ENCODE measurements at regions of chr6 and their contacts with region 1.

Region 1: GRCh38 chr6:132971654-132972053 is 157.3 kb downstream of the RPS12 start:
- DNase-seq: no peak
- H3K27ac ChIP-seq: no peak overlapping the region
- CTCF ChIP-seq: no peak

Region 2: GRCh38 chr6:132569170-132569569 is 402.5 kb before region 1 on chr6:
- CTCF ChIA-PET with region 1: no interaction called
- POLR2A ChIA-PET with region 1: no interaction called
- DNase-seq: no peak
- H3K27ac ChIP-seq: no peak overlapping the region
- CTCF ChIP-seq: no peak

Region 3: DNA sequence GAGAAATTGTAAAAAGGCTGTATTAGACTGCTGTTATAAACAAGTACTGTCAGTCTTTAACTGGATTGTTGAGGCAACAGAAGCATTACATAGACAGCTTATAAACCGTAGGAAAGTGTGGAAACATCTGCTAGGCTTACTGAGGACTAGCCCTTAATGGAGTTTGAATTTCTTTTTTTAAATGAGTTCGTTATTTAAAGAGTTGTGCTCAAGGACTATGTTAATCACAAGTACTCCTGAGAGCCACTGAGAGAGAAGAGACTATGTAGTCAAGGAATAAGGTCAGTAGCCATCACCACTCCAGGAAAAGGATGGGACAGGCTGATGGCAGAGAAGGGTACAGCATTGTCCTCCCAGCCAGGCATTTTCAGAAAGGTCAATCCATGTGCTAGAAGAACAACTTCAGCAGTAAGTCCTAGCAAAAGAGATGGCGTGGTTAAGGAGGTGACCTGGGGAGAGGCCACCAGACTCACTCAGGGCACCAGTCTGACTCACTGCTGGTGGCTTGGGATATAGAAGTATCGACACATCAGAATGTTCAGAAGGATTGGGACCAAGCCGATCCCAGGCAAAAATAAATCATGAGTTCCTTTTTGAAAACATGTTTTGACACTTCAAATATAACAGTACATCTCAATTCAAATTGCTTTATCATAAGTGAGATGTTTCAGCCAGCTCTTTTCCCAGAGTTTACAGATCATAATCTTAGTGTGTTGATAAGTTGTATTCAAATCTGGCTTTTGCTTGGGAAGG is 150.8 kb before region 1 on chr6:
- CTCF ChIA-PET with region 1: no interaction called
- POLR2A ChIA-PET with region 1: no interaction called
- DNase-seq: no peak
- H3K27ac ChIP-seq: no peak overlapping the region
- CTCF ChIP-seq: no peak

Region 4: DNA sequence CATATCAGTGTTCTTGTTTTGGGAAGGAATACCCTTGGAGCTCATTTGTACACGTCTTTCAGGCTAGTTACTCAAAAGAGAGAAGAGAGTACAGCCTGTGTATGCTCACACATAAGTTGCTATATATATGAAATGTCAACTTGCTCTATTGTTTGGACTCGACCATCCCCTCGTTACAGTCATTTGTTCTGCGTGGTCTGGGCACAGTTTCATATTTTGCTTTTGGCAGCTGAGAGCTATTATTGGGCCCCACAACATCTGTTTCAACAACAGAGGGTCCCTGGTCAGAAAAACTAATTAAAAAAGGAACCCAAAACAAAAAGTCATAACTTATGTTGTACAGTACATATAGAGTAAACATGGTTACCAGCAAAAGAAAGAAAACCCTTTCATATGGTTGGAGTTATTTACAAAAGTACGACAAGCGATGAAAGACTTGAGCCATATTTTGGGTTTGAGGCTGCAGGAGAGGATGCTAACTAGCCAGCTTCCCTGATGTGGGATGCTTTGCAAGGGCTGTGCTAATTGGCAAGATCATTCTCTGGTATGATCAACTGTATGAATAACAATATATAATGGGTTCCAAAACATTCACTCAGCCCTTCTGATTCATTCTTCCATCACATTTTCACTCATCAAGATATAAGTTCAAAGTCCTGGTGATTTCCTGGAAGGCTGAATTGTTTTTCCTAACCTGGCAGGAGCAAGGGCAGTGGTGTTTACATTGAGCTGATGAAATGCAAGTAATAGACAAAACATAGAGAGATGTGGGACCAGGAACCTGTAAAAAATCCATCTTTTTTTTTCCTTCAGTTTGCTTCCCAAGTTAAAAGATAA is 19.4 kb before region 1 on chr6:
- CTCF ChIA-PET with region 1: no interaction called
- POLR2A ChIA-PET with region 1: no interaction called
- DNase-seq: no peak
- H3K27ac ChIP-seq: no peak overlapping the region
- CTCF ChIP-seq: no peak

Region 5: GRCh38 chr6:133542056-133542821 is 570.6 kb after region 1 on chr6:
- CTCF ChIA-PET with region 1: interaction called, 10 read pairs
- POLR2A ChIA-PET with region 1: no interaction called
- DNase-seq: no peak
- H3K27ac ChIP-seq: no peak overlapping the region
- CTCF ChIP-seq: no peak